ENCODE measurements at regions of chr19 and their contacts with region 1.

Region 1: DNA sequence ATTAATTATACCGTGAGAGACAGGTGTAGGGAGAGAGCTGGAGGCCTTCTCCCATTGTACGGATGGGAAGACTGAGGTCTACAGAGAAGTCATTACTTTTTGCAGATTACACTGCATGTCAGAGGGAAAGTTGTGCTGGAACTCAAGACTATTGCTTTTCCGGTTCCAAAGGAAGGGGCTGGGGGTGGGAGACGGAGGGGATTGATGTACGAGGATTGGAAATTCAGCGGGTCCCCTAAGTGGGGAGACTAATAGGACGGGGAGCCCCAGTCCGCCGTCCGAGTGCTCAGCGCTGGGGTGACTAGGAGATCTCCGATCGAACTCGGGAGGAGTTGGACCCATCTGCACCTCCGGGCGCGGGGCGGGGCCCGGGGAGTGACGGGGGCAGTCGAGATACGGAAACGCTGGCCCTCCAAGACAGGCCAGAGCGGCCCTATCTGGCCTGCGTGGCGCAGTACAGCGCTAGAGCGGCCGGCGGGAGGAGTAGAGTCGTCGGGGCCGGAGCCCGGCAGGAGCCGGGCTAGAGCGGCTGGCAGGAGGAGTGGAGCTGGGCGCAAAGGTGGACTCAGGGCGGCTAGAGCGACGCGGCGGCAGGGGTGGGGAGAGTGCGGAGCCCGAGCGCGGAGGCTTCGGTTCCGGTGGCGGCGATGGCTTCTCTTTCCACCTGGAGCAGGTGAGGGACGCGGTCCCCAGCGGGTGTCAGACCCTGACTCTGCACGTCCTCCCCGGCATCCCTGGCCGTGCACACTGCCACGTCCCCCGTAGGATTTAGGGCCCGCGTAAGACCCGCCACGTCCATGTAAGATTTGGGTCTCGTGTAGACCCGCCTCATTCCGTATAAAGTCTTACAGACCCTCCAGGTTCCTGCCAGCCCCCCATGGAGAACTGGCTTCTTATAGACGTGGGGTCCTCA is 1.1 kb downstream of the ARHGEF1 start:
- DNase-seq: peak; percentile 97
- H3K4me3 Mint-ChIP-seq: peak overlapping the region; percentile 83
- H3K27ac Mint-ChIP-seq: peak overlapping the region; percentile 94
- H3K4me1 Mint-ChIP-seq: peaks cover 50% of the 10 kb centered on the region
- H3K27me3 Mint-ChIP-seq: no peaks in the 10 kb centered on the region

Region 2: GRCh38 chr19:40603389-40604135 is 1280.5 kb before region 1 on chr19:
- intact Hi-C with region 1: loop called (anchors 10 kb)
- DNase-seq: peak; percentile 99
- H3K4me3 Mint-ChIP-seq: peak overlapping the region; percentile 94
- H3K27ac Mint-ChIP-seq: peak overlapping the region; percentile 92
- H3K4me1 Mint-ChIP-seq: peaks cover 60% of the 10 kb centered on the region
- H3K27me3 Mint-ChIP-seq: peaks cover 27% of the 10 kb centered on the region

Region 3: GRCh38 chr19:41859618-41860418 is 24.3 kb before region 1 on chr19 and contains the start of gene RPS19:
- intact Hi-C with region 1: loop called (anchors 1 kb)
- DNase-seq: peak; percentile 100
- H3K4me3 Mint-ChIP-seq: peak within 1 kb of the TSS; percentile 89
- H3K27ac Mint-ChIP-seq: peak within 1 kb of the TSS; percentile 98
- H3K4me1 Mint-ChIP-seq: peaks cover 44% of the 10 kb centered on the region
- H3K27me3 Mint-ChIP-seq: peaks cover 8% of the 10 kb centered on the region
- total RNA-seq, gene RPS19: 2,909 and 2,931 TPM in 2 replicates

Region 4: GRCh38 chr19:41928221-41928683 is 44.2 kb after region 1 on chr19 and contains the start of gene ERFL:
- intact Hi-C with region 1: loop called (anchors 2 kb)
- DNase-seq: peak; percentile 80
- H3K4me3 Mint-ChIP-seq: peak within 1 kb of the TSS; percentile 80
- H3K27ac Mint-ChIP-seq: peak within 1 kb of the TSS; percentile 84
- H3K4me1 Mint-ChIP-seq: peaks cover 25% of the 10 kb centered on the region
- H3K27me3 Mint-ChIP-seq: peaks cover 8% of the 10 kb centered on the region
- total RNA-seq, gene ERFL: 3.1 and 4.2 TPM in 2 replicates

Region 5: GRCh38 chr19:41959056-41960053 is 75.3 kb after region 1 on chr19 and contains the start of gene RABAC1:
- intact Hi-C with region 1: loop called (anchors 1 kb)
- DNase-seq: peak; percentile 97
- H3K4me3 Mint-ChIP-seq: peak within 1 kb of the TSS; percentile 89
- H3K27ac Mint-ChIP-seq: peak within 1 kb of the TSS; percentile 92
- H3K4me1 Mint-ChIP-seq: peaks cover 14% of the 10 kb centered on the region
- H3K27me3 Mint-ChIP-seq: no peaks in the 10 kb centered on the region
- total RNA-seq, gene RABAC1: 37.2 and 41.5 TPM in 2 replicates

Region 6: DNA sequence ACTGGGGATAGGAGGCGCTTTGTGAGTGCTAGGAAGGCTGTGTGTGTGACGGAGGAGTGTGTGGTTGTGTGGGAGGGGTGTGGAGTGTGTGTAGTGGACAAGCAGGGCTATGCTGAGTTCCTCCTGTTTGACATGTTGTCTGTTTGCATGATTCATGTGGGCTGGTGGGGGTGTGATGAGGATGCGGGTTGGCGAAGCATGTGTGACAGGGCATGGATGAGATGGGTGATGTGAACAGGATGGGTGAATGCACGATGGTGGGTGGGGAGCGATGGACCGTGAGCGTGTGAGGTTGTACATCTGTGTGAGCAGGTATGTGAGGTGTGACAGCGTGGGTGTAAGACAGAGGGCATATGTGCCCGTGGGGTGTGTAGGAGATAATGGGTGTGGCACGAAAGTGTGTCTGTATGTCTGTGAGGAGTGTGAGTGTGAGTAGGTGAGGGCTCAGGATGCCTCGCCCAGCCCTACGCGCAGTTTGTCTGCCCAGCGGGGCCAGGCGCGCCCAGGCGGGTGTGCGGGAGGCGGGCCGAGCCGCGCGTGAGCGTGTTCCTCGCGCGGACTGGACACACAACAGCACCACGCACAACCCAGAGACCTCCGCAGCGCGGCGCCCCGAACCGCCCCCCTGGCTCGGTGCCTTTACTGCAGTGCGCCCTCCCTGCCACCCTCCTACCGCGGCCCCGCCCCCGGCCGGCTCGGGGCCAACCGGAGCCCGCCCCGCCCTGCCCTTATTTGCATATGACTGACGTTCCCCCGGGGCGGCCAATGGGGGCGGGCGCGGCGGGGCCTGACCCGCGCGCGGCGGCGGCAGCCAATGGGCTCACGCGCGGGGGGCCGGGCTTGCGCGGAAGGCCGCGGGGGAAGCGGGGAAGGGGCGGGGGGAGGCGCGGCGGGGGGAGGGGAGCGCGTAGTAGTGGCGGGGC is 399.3 kb after region 1 on chr19:
- intact Hi-C with region 1: loop called (anchors 5 kb)
- DNase-seq: peak; percentile 98
- H3K4me3 Mint-ChIP-seq: no peak overlapping the region
- H3K27ac Mint-ChIP-seq: no peak overlapping the region
- H3K4me1 Mint-ChIP-seq: peaks cover 39% of the 10 kb centered on the region
- H3K27me3 Mint-ChIP-seq: no peaks in the 10 kb centered on the region

Measured in activated CD4-positive, alpha-beta T cell treated with anti-CD3 and anti-CD28 coated beads, Interleukin-2, amount 10 ng/mL, durations not matched to agents 24 days and 14 days (primary cell).